ENCODE measurements at regions of chr22 and their contacts with region 1.

Region 1: DNA sequence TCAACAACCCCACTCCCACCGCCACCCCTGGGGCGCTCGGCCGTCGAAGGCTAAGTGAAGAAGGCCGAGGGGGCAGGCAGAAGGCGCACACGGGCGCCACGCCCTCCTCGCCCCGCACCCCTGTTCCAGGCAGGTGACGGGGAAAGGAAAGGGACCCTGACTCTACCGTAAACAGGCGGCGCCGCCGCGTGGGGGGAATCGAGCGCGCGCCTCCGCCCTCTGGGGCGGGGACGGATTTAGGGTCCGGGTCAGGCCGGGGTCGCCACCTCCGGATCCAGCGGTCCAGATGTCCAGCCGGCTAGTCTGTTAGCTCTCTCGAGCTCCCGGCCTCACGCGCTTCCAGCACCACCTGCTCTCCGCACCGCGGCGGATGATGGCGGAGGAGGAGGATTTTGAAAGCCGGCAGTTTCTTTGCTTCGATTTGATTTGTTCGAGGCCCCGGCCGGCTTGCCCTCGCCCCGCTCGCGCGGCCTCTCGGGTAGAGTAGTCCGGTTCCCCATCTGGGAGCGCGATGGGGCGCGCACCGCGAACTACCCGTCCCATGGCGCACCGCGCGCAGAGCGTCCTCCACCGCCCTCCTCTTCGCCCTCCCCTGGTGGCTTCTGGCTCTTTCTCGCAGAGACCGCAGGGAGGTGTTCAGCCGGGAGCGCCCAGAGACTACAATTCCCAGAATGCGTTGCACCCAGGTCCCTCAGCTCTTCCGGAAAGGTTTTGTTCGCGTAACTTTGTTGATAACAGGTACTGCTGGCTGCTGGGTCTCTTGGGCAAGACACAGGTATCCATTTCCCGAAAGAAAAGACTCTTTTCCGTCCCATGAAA is at the start of gene RANGAP1:
- DNase-seq: peak; percentile 99
- H3K4me3 Mint-ChIP-seq: peak within 1 kb of the TSS; percentile 98
- H3K27ac Mint-ChIP-seq: peak within 1 kb of the TSS; percentile 100
- H3K4me1 Mint-ChIP-seq: peaks cover 37% of the 10 kb centered on the region
- H3K27me3 Mint-ChIP-seq: no peaks in the 10 kb centered on the region
- total RNA-seq, gene RANGAP1: 173 to 174 TPM

Region 2: GRCh38 chr22:40753114-40753513 is 532.9 kb before region 1 on chr22:
- CTCF ChIA-PET with region 1: no interaction called
- intact Hi-C with region 1: no loop called
- DNase-seq: no peak
- H3K4me3 Mint-ChIP-seq: no peak overlapping the region
- H3K27ac Mint-ChIP-seq: no peak overlapping the region
- H3K4me1 Mint-ChIP-seq: peaks cover 3% of the 10 kb centered on the region
- H3K27me3 Mint-ChIP-seq: no peaks in the 10 kb centered on the region

Region 3: DNA sequence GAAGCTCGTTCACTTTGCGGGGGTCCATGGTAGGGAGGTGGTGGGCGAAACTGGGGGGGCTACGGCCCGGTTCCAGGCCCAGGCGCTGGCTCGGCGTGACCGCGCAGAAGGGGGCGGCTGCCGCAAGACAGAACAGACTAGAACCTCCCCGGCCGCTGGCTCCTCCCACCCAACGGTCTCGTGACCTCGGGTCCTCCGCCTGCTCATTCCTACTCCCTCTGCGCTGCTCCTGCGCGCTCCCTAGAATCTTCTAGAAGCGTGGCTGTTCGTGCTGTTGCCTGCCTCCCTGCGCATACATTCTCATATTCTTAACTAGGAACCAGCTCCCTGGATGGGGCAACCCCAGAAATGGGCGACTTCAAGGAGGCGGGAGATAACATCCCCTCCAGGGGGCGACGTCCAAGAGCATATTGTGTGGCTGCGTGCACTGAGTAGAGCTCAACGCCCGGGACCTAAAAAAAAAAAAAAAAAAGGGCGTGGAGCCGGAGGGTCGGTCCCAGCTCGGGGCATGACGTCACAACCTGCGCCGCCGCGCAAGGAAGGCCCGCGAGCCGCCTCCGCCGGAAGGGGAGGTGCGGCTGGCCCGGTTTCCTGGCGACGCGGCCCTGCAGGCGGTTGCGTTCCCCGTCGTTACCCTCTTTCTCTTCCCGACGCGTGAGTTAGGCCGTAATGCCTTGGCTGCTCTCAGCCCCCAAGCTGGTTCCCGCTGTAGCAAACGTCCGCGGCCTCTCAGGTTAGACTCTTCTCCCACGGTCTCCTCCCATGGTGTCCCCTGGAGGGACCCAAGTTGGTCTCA is 429.3 kb before region 1 on chr22 and contains the starts of genes ST13 and XPNPEP3:
- CTCF ChIA-PET with region 1: no interaction called
- intact Hi-C with region 1: loop called (anchors 1 kb)
- DNase-seq: peak; percentile 98
- H3K4me3 Mint-ChIP-seq: peak within 1 kb of the TSS; percentile 95
- H3K27ac Mint-ChIP-seq: peak within 1 kb of the TSS; percentile 99
- H3K4me1 Mint-ChIP-seq: peaks cover 51% of the 10 kb centered on the region
- H3K27me3 Mint-ChIP-seq: no peaks in the 10 kb centered on the region
- total RNA-seq, gene ST13: 240 to 254 TPM
- total RNA-seq, gene XPNPEP3: 15.7 to 19.6 TPM

Region 4: DNA sequence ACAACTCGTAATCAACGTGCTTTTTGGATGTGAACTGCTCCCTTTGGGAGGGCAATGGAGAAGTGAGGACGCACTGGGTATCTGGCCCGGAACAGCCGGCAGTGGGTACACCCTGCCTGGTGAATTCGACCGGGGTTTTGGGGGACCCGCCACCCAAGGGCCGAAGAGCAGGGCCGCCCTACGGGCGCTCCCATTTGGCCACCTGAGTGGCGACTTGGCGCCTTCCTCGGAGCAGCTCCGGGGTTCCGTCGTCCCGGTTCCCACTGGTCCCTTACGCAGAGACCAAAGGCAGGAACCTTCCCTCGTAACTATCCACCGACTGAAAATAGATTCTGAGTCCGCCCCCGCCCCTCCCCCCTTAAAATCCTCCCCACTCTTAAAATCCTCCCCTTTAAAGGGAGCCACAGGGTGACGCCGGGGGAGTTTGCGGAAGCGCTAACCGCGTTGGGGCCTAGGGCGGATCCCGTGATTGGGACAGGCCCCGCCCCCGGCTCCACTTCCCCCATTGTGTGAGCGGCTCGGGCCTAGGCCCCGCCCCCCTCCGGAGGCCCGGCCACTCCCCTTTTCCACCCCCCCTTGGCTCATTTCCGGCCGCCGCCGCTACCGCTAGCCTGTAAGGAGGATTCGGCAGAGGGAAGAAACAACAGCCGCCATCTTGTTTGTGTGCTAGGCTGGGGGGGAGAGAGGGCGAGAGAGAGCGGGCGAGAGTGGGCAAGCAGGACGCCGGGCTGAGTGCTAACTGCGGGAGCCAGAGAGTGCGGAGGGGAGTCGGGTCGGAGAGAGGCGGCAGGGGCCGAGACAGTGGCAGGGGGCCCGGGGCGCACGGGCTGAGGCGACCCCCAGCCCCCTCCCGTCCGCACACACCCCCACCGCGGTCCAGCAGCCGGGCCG is 194.7 kb before region 1 on chr22:
- CTCF ChIA-PET with region 1: no interaction called
- intact Hi-C with region 1: loop called (anchors 1 kb)
- DNase-seq: peak; percentile 99
- H3K4me3 Mint-ChIP-seq: peak overlapping the region; percentile 93
- H3K27ac Mint-ChIP-seq: peak overlapping the region; percentile 99
- H3K4me1 Mint-ChIP-seq: peaks cover 25% of the 10 kb centered on the region
- H3K27me3 Mint-ChIP-seq: no peaks in the 10 kb centered on the region

Region 5: DNA sequence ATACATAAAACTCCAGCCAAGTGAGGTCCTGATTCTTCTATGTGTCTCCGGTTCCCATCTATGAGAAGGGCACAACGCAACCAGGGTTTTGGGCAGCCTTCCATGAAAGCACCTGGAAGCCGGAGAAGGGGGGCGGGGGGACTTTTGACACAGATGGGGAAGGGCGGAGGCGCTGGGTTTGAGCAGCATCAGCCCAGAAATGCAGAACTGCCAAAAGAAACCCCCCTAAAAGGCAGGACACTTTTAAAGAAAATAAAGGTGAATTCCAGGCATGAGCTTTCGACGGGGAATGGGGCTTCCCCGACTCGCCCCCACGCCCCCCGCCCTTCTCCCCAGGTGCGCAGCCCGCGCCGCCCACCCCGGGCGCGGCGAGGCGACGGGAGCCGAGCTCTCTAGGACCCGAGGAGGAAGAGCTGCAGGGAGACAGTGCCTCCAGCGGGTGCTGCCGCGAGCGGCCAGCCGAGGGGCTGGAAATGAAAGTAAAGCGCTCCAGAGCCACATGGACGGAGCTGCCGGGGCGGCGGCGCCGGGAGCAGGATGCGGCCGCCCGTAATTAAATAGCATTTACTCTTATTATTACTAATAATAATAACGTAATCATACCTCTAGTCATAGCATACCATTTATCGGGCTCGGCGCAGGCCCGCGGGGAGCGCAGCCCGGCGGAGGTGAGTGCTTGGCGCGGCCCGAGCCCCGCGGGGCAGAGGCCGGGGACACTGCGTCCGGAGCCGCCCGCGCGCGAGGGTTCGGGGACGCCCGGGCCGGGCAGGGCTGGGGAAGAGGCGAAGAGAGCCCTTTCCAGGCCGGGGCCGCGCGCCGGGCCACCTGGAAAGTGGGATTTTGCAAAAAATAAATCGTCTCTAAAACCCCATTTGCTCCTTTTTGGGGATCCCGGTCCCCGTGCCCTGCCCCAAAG is 15.3 kb after region 1 on chr22 and contains the start of gene ZC3H7B:
- CTCF ChIA-PET with region 1: interaction called, 4 read pairs
- intact Hi-C with region 1: loop called (anchors 1 kb)
- DNase-seq: peak; percentile 88
- H3K4me3 Mint-ChIP-seq: peak within 1 kb of the TSS; percentile 74
- H3K27ac Mint-ChIP-seq: peak within 1 kb of the TSS; percentile 76
- H3K4me1 Mint-ChIP-seq: peaks cover 37% of the 10 kb centered on the region
- H3K27me3 Mint-ChIP-seq: no peaks in the 10 kb centered on the region
- total RNA-seq, gene ZC3H7B: 30.0 to 30.3 TPM

Region 6: DNA sequence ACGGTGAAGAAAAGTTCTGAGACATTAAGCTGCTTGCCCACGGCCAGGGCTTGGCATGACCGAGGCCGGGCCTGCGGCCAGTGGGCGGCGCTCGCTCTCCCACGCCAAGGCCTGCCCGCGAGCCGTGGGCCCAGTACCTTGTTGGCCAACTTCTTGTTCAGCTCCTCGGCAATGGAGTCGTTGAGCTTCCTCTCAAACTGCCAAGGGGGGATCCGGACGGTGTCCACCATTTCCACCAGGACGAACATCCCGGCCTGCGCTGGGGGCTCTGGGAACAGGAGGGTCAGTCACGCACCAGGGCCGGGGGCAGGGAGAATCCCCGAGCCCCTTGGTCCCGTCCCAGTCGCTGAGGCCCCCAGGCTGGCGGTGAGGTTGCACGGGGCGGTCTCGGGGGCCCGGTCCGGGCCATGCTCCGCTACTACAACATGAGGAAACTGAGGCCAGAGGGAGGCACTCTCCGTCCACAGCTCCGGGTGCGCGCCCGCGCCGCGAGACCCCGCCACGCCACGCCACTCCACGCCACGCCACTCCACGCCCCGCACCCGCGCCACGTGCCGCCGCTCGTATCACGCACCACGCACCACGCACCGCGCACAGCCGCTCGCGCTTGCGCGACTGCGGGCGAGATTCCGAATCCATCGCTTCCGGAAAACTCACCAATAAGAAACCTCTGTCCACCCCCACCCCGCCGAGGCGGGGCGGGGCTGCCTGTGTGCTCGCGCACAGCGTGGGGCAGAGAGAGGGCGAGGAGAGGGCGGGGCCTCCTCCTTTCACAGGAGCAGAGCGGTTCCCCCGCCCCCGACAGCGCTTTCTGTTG is 258.0 kb after region 1 on chr22 and contains the start of gene POLR3H:
- CTCF ChIA-PET with region 1: no interaction called
- intact Hi-C with region 1: loop called (anchors 1 kb)
- DNase-seq: peak; percentile 97
- H3K4me3 Mint-ChIP-seq: peak within 1 kb of the TSS; percentile 94
- H3K27ac Mint-ChIP-seq: peak within 1 kb of the TSS; percentile 87
- H3K4me1 Mint-ChIP-seq: peaks cover 43% of the 10 kb centered on the region
- H3K27me3 Mint-ChIP-seq: no peaks in the 10 kb centered on the region
- total RNA-seq, gene POLR3H: 14.8 to 17.6 TPM

Measured in activated naive CD4-positive, alpha-beta T cell treated with anti-CD3 and anti-CD28 coated beads for 36 hours (primary cell).